Activated B cell treated with CpG ODN at 0.5 μM for 24 hours (primary cell): ENCODE measurements at regions of chr2 and their contacts with region 1.

Region 1: GRCh38 chr2:174603280-174603679 is 5.7 kb upstream of the WIPF1 start:
- DNase-seq: no peak
- ATAC-seq: peak; percentile 25
- H3K4me3 Mint-ChIP-seq: no peak overlapping the region
- H3K27ac Mint-ChIP-seq: peak overlapping the region; percentile 68
- H3K4me1 Mint-ChIP-seq: peaks cover 82% of the 10 kb centered on the region
- H3K27me3 Mint-ChIP-seq: no peaks in the 10 kb centered on the region
- CTCF ChIP-seq: no peak

Region 2: DNA sequence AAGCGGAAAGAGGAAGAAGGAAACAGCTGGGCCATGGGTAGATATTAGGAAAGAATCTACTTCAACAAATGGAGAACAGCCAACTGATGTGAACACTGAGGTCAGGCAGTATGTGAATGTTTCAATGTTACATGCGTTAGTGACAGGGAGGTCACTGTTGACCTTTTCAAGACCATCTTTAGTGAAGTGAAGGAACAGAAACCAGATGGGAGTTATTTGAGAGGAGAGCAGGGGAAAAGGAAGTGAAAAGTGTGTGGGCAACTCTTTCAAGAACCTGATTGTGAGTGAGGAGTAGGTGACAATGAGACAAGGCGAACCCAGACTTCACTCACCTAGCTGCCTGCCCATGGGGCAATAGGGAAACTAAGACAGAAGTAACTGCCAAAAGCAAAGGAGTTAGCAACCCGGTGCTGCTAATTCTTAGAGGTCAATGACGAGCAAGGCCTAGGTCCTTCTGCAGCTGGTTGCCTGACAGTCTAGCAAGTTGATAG is 705.1 kb before region 1 on chr2:
- CTCF ChIA-PET with region 1: no interaction called
- POLR2A ChIA-PET with region 1: no interaction called
- intact Hi-C with region 1: no loop called
- DNase-seq: no peak
- ATAC-seq: peak; percentile 90
- H3K4me3 Mint-ChIP-seq: peak overlapping the region; percentile 52
- H3K27ac Mint-ChIP-seq: peak overlapping the region; percentile 51
- H3K4me1 Mint-ChIP-seq: peaks cover 41% of the 10 kb centered on the region
- H3K27me3 Mint-ChIP-seq: no peaks in the 10 kb centered on the region
- CTCF ChIP-seq: no peak

Region 3: DNA sequence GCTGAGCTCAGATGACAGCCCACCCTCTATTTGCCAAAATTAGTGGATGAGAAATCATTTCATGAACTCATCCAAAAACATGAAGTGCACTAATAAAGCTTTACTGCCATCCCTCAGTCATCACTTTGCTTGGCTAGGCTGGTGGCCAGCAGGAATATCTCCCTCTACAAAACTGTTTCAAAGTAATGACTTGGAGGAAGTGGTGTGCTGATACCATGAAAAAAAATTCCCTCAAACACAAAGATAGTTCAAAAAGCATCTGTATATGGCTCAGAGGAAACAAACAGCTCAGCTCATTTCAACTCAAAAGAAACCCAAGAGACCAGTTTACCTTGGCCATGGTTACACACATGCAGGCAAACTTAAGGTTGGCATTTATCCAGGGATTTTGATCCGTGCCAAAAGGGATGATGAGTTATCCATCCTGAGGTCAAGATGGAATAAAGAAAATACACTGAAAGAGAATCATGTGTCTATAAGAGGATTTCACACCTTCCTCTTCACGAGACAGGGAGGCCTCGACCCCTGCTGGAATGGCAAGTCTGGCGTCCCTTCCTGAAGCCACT is 12.7 kb after region 1 on chr2:
- CTCF ChIA-PET with region 1: interaction called, 3 read pairs
- POLR2A ChIA-PET with region 1: interaction called, 301 read pairs
- intact Hi-C with region 1: loop called (anchors 1 kb)
- DNase-seq: no peak
- ATAC-seq: peak; percentile 18
- H3K4me3 Mint-ChIP-seq: peak overlapping the region; percentile 63
- H3K27ac Mint-ChIP-seq: peak overlapping the region; percentile 83
- H3K4me1 Mint-ChIP-seq: peaks cover 83% of the 10 kb centered on the region
- H3K27me3 Mint-ChIP-seq: no peaks in the 10 kb centered on the region
- CTCF ChIP-seq: no peak

Region 4: GRCh38 chr2:174663550-174663949 is 60.3 kb after region 1 on chr2:
- CTCF ChIA-PET with region 1: no interaction called
- POLR2A ChIA-PET with region 1: no interaction called
- intact Hi-C with region 1: no loop called
- DNase-seq: no peak
- ATAC-seq: no peak
- H3K4me3 Mint-ChIP-seq: no peak overlapping the region
- H3K27ac Mint-ChIP-seq: no peak overlapping the region
- H3K4me1 Mint-ChIP-seq: peaks cover 25% of the 10 kb centered on the region
- H3K27me3 Mint-ChIP-seq: no peaks in the 10 kb centered on the region
- CTCF ChIP-seq: no peak

Region 5: DNA sequence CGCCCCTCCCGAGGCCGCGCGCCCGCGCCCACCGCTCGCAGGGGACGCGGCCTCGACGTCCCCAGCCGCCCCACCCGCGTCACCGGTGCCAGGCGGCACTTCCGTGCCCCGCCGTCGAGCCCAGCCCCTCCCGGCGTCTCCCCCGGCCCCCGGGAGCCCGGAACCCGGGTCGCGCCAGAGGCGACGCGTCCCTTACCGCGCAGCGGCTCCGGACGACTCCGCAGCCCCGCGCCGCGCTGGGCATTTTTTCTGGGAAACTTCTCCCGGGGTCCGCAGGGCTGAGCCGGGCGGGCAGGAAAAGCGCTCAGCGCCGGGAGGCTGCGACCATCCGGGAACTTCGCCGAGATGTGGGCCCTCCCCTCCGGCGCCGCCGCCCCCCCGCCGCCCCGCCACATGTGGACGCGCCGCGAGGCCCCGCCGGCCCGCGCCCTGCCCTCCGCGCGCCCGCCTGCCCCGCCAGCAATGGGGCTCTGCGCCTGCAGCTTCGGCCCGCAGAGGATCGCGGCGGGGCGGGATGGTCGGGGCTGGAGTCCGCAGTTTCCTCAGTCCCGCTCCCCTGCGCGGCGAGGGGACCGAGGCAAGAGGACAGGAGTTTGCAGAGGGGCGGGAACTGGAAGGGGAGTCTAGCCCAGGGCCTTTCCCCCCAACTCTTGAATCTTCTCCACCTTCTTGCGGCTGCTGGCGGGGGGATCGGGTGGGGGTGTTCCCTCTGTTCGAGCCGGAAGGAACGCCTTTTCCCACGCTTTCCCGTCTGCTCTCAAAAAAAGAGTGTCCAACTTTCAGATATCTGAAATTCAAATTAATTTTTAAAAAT is 79.5 kb after region 1 on chr2:
- CTCF ChIA-PET with region 1: interaction called, 34 read pairs
- POLR2A ChIA-PET with region 1: interaction called, 20 read pairs
- intact Hi-C with region 1: loop called (anchors 1 kb)
- DNase-seq: peak; percentile 63
- ATAC-seq: peak; percentile 74
- H3K4me3 Mint-ChIP-seq: peak overlapping the region; percentile 90
- H3K27ac Mint-ChIP-seq: peak overlapping the region; percentile 83
- H3K4me1 Mint-ChIP-seq: peaks cover 16% of the 10 kb centered on the region
- H3K27me3 Mint-ChIP-seq: no peaks in the 10 kb centered on the region
- CTCF ChIP-seq: no peak

Region 6: GRCh38 chr2:174688079-174688478 is 84.8 kb after region 1 on chr2:
- CTCF ChIA-PET with region 1: interaction called, 34 read pairs
- POLR2A ChIA-PET with region 1: interaction called, 20 read pairs
- intact Hi-C with region 1: loop called (anchors 1 kb)
- DNase-seq: no peak
- ATAC-seq: peak; percentile 41
- H3K4me3 Mint-ChIP-seq: no peak overlapping the region
- H3K27ac Mint-ChIP-seq: no peak overlapping the region
- H3K4me1 Mint-ChIP-seq: peaks cover 11% of the 10 kb centered on the region
- H3K27me3 Mint-ChIP-seq: peaks cover 3% of the 10 kb centered on the region
- CTCF ChIP-seq: peak; percentile 55